ENCODE measurements at regions of chr16 and their contacts with region 1.

Region 1: GRCh38 chr16:23149349-23149996 is at the start of gene USP31:
- DNase-seq: peak; percentile 97 to 98 (median 98)
- ATAC-seq: peak; percentile 98 to 99 (median 98)
- H3K4me3 ChIP-seq: peak within 1 kb of the TSS; percentile 65 to 95 (median 80)
- H3K27ac ChIP-seq: peak within 1 kb of the TSS; percentile 72 to 94 (median 83)
- H3K4me1 ChIP-seq: peaks cover 4 to 49% (median 34%) of the 10 kb centered on the region in 12 donors
- H3K27me3 ChIP-seq: no peaks in the 10 kb centered on the region
- CTCF ChIP-seq: no peak
- POLR2A ChIP-seq: no peak
- total RNA-seq, gene USP31: 19.1 to 49.9 (median 23.8) TPM

Region 2: DNA sequence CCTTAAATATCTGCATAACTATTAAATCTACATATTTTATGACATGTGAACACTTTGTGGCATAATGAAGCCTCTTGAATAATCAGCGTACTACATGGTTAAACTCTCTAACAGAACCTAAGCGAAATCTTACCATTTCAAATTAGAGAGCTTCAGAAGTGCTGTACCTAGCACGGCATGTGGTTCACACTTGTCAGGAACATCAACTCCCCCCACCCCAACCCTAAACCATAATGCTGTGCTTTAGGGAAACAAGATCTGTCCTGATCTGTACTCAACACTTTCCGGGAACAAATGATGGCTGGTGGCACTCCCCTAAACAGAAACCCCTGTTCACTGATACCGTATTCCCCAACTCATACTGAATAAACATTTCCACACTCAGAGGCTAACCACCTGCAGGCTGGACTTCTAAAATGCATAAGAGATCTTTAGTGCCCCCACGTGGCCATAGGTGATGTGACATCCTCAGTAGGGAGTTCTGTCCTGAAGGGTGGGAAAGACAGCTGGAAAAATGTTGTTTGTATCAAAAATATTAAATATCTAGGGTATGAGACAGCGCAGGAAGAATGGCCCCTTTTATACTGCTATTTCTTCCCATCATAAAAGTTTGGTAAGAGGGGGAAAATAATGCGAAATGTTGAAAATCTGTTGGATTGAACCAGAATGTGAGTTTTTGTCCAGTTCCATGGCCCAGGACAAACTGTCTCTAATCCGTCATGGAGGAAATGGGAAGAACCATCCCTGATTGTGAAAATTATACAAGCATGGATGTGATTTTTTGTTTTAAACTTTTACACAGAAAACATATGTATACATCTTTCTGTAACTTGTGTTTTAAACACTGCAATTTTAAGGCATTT is 88.8 kb before region 1 on chr16:
- intact Hi-C with region 1: loop called in 1 of 10 experiments (anchors 5 kb)
- DNase-seq: peak in 4 of 5 donors; percentile 57 to 73 (median 60)
- ATAC-seq: peak; percentile 57 to 84 (median 79)
- H3K4me3 ChIP-seq: no peak overlapping the region
- H3K27ac ChIP-seq: no peak overlapping the region
- H3K4me1 ChIP-seq: peaks cover 0 to 14% (median 5%) of the 10 kb centered on the region in 12 donors
- H3K27me3 ChIP-seq: peaks cover 0 to 3% (median 0%) of the 10 kb centered on the region in 9 donors
- CTCF ChIP-seq: peak; percentile 70 to 87 (median 82)
- POLR2A ChIP-seq: no peak

Region 3: GRCh38 chr16:23088018-23088417 is 61.5 kb before region 1 on chr16:
- intact Hi-C with region 1: loop called in 1 of 10 experiments (anchors 5 kb)
- DNase-seq: peak in 3 of 5 donors; percentile 33 to 65 (median 63)
- ATAC-seq: peak; percentile 92 to 95 (median 94)
- H3K4me3 ChIP-seq: no peak overlapping the region
- H3K27ac ChIP-seq: peak overlapping the region in 6 of 12 donors; percentile 6 to 69 (median 50)
- H3K4me1 ChIP-seq: peaks cover 0 to 30% (median 5%) of the 10 kb centered on the region in 12 donors
- H3K27me3 ChIP-seq: no peaks in the 10 kb centered on the region
- CTCF ChIP-seq: no peak
- POLR2A ChIP-seq: no peak

Region 4: DNA sequence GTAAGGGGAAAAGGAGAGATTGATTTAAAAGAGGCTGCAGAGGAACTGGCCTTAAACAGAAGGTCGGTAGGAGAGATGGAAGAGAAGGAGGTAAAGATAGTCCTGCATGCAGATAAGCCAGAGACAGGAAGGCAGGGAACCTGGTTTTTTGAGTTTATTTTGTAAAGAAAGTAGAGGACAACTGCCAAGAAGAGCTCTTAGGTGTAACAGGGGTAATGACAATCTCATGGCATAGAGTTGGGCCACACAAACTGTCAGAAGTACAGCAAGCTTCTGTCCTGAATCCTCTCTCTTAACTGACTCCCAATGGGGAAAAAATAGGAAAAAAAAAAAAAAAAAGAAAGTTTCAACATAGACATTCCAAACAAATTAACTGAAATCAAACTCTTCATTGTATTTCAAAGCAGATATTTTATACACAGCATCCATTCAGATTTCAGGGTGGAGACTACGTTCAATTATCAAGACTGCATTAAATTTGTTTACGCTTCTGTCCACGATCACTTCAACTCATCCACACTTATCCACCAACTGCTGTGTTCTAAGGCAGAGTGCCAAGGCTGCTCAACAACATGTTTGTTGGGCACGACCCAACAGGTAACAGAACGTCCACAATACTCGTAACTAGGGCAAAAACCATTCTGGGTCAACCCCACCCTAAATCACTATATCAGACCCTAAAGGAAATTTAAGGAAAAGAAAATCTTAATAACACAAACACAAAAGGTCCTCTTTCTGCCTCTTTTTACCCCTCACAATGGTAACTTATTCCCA is 35.2 kb before region 1 on chr16:
- intact Hi-C with region 1: loop called in 1 of 10 experiments (anchors 5 kb)
- DNase-seq: peak in 1 of 5 donors; percentile 39
- ATAC-seq: peak in 3 of 4 donors; percentile 38 to 74 (median 53)
- H3K4me3 ChIP-seq: no peak overlapping the region
- H3K27ac ChIP-seq: peak overlapping the region in 3 of 12 donors; percentile 13 to 35 (median 17)
- H3K4me1 ChIP-seq: peaks cover 0 to 50% (median 19%) of the 10 kb centered on the region in 12 donors
- H3K27me3 ChIP-seq: no peaks in the 10 kb centered on the region
- CTCF ChIP-seq: no peak
- POLR2A ChIP-seq: no peak

Region 5: GRCh38 chr16:23131931-23132621 is 17.4 kb before region 1 on chr16:
- intact Hi-C with region 1: loop called in 1 of 10 experiments (anchors 2 kb)
- DNase-seq: no peak
- ATAC-seq: peak in 3 of 4 donors; percentile 39 to 83 (median 50)
- H3K4me3 ChIP-seq: peak overlapping the region in 10 of 12 donors; percentile 16 to 47 (median 29)
- H3K27ac ChIP-seq: peak overlapping the region; percentile 60 to 90 (median 88)
- H3K4me1 ChIP-seq: peaks cover 10 to 62% (median 45%) of the 10 kb centered on the region in 12 donors
- H3K27me3 ChIP-seq: no peaks in the 10 kb centered on the region
- CTCF ChIP-seq: no peak
- POLR2A ChIP-seq: no peak

Measured in heart left ventricle (tissue), 16 donors.